Heart right ventricle (tissue), 16 donors: ENCODE measurements at regions of chr22 and their contacts with region 1.

Region 1: DNA sequence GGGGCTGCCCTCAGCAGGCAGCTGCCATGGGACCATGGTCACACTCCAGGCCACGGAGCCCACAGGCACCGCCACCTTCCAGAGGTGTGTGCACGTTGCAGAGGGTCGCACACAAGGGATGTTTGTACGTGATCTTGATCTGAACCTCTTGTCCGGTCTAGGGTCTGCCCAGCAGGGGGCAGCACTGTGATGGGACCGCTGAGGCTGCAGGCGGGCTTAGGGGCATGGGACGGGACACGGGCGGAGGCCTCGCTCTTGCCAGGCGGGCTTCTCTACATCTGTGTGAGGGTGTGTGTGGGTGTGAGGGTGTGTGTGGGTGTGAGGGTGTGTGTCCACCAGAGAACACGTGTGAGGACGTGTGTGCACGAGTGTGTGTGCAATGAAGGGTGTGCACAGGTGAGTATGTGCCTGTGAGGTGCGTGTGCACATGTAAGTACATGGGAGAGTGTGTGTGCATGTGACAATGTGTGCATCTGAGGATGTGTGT is 52.4 kb downstream of the CACNA1I start:
- DNase-seq: peak; percentile 26 to 66
- ATAC-seq: peak in 7 of 8 donors; percentile 45 to 68 (median 58)
- H3K4me3 ChIP-seq: no peak overlapping the region
- H3K27ac ChIP-seq: no peak overlapping the region
- H3K4me1 ChIP-seq: no peaks in the 10 kb centered on the region
- H3K27me3 ChIP-seq: peaks cover 0 to 92% (median 87%) of the 10 kb centered on the region in 7 donors
- CTCF ChIP-seq: peak; percentile 24 to 65 (median 60)

Region 2: DNA sequence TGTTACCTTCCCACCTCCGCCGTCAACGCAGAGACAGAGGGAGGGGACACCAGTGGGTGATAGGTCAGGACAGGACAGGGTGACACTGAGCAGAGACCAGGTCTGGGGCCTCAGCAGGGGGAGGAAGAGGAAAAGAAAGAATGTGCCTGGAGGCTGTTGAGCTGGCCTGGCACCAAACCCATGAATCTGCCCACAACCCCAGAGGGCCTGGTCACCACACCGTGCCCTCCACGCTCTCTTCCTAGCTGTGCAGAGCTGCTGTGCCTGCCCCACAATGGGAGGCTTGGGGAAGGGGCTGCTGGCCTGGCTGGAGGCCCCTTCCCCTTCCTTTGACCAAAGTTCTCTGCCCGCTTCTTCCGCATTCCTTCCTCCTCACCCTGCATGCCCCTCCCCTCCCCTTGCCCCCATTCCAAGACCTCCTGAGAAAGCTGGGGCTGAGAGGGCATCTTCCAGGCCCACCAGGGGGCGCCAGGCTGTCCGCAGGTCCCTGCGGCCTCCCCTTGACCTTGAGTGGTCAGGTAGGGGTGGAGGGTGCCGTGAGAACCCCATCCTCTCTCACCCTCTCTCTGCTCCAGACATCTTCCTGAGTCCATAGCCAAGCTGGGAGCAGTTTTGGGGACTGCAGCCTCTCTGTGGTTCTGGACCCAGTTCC is 63.3 kb before region 1 on chr22:
- intact Hi-C with region 1: loop called in 1 of 10 experiments (anchors 10 kb)
- DNase-seq: no peak
- ATAC-seq: peak in 3 of 8 donors; percentile 14 to 47 (median 33)
- H3K4me3 ChIP-seq: no peak overlapping the region
- H3K27ac ChIP-seq: no peak overlapping the region
- H3K4me1 ChIP-seq: peaks cover 0 to 8% (median 3%) of the 10 kb centered on the region in 9 donors
- H3K27me3 ChIP-seq: peaks cover 12 to 78% (median 63%) of the 10 kb centered on the region in 7 donors
- CTCF ChIP-seq: peak in 8 of 9 donors; percentile 14 to 45 (median 36)

Region 3: DNA sequence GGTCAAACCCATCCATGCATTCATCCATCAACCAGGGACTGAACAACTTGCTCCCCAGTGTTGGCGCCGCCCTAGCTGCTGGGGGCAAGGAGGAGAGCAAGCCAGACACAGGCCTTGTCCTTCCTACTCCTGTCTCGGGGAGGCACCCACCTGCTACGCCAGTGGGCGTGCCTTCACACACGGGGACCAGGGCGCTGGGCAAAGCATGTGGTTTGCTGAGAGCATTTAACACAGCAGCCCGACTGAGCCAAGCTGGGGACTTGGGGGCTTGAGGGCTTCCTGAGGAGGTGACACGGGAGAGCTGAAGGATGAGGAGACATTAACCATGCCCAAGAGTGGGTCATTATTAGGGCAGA is 21.8 kb before region 1 on chr22:
- intact Hi-C with region 1: no loop called
- DNase-seq: no peak
- ATAC-seq: no peak
- H3K4me3 ChIP-seq: no peak overlapping the region
- H3K27ac ChIP-seq: no peak overlapping the region
- H3K4me1 ChIP-seq: no peaks in the 10 kb centered on the region
- H3K27me3 ChIP-seq: peaks cover 0 to 63% (median 31%) of the 10 kb centered on the region in 7 donors
- CTCF ChIP-seq: no peak